Heart left ventricle (tissue), 16 donors: ENCODE measurements at regions of chr7 and their contacts with region 1.

Region 1: DNA sequence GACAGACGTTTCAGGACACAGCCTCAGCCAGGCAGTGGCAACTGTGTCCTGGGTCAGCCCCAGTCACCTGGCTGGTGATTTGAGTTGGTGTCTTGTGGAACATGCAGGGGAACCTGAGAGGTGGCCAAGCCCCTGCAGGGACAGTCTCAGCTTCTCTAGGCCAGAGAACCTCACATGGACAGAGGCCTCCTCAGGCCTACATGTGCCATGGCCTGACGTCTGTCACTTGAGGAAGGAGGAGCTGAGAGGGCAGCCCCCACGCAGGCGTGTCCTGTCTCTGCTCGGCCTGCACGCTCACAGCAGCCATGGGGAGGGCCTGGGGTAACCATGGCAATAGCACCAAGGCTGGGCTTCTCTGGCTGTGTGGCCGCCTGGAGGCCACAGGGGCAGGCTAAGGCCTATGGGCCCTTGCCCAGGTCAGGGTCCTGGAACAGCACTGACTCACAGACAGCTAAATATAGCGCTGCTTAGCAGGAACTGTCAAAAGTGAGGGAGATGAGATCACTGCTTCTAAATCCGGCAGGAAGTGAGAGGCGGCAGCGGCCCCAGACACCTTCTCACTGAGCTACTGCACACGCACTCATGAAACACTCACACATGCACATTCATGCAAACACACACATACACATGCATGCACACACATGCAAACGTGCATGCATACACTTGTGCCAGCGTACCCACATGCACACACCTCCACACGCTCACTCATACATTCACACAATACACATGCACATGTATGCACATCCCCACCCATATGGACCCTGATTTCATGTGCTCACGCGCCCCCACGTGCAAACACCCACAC is 57.0 kb downstream of the YKT6 start:
- DNase-seq: peak; percentile 83 to 93 (median 87)
- ATAC-seq: peak; percentile 89 to 93 (median 92)
- H3K4me3 ChIP-seq: no peak overlapping the region
- H3K27ac ChIP-seq: peak overlapping the region; percentile 75 to 96 (median 88)
- H3K4me1 ChIP-seq: peaks cover 18 to 76% (median 56%) of the 10 kb centered on the region in 12 donors
- H3K27me3 ChIP-seq: no peaks in the 10 kb centered on the region
- CTCF ChIP-seq: peak in 4 of 12 donors; percentile 19 to 34 (median 30)
- POLR2A ChIP-seq: no peak

Region 2: DNA sequence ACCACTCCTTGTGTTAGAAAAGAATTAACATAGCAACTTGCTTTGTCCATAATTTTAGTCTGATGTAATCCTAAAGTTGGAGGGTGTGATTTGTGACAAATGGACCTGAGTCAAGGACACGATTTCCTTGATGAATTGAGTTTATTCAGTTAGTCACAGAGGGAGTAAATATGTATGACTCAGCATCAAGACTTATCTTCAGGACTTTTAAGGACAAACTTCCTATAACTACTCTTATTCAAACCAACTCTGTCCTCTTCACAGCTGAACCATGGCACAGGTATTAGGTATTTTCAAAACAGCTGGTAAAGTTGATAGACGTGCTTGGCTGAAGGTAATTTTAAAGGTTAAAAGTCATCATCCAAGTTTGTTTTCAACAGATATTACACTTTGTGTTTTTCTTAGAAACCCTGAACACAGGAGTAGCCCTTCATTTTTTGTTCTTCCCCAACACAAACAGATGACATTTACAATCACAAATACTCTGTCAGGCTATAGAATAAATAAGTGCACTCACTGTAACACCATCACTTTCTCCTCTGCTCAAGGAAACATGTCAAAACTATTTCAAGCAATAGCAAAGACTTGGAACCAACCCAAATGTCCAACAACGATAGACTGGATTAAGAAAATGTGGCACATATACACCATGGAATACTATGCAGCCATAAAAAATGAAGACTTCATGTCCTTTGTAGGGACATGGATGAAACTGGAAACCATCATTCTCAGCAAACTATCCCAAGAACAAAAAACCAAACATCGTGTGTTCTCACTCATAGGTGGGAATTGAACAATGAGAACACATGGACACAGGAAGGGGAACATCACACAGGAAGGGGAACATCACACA is 583.0 kb before region 1 on chr7:
- intact Hi-C with region 1: no loop called
- DNase-seq: no peak
- ATAC-seq: peak in 3 of 4 donors; percentile 58 to 70 (median 65)
- H3K4me3 ChIP-seq: no peak overlapping the region
- H3K27ac ChIP-seq: peak overlapping the region in 1 of 12 donors; percentile 46
- H3K4me1 ChIP-seq: peaks cover 0 to 42% (median 8%) of the 10 kb centered on the region in 12 donors
- H3K27me3 ChIP-seq: no peaks in the 10 kb centered on the region
- CTCF ChIP-seq: no peak
- POLR2A ChIP-seq: no peak

Region 3: GRCh38 chr7:44291066-44291732 is 33.4 kb after region 1 on chr7:
- intact Hi-C with region 1: loop called in 2 of 10 experiments (anchors 5 kb)
- DNase-seq: peak; percentile 77 to 89 (median 88)
- ATAC-seq: peak; percentile 62 to 83 (median 69)
- H3K4me3 ChIP-seq: no peak overlapping the region
- H3K27ac ChIP-seq: peak overlapping the region; percentile 62 to 92 (median 82)
- H3K4me1 ChIP-seq: peaks cover 0 to 76% (median 49%) of the 10 kb centered on the region in 12 donors
- H3K27me3 ChIP-seq: peaks cover 0 to 4% (median 0%) of the 10 kb centered on the region in 9 donors
- CTCF ChIP-seq: no peak
- POLR2A ChIP-seq: no peak